WTC11 (cell line): ENCODE measurements at regions of chr9 and their contacts with region 1.

Region 1: DNA sequence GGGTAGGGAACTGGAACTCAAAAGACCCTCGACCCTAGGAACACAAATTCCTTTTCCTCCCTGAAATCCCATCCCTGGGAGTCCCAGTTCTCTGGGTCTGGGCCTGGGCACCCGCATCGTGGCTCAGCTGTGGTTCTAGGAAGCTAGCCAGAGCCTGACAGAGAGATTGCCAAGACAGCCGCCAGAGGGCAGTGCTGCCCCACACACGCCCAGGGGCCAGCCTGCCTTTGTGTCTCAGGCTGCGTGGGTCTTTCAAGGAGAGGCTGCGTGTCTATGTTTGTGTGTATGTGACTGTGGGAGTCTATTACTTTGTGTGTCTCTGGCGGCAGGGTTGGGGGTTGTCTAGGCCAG is 32.0 kb upstream of the TTLL11 start:
- DNase-seq: peak; percentile 84
- ATAC-seq: peak; percentile 59
- H3K4me3 Mint-ChIP-seq: peak overlapping the region; percentile 73
- H3K27ac Mint-ChIP-seq: no peak overlapping the region
- H3K4me1 Mint-ChIP-seq: peaks cover 22% of the 10 kb centered on the region
- H3K27me3 Mint-ChIP-seq: peaks cover 38% of the 10 kb centered on the region
- CTCF ChIP-seq: peak; percentile 88

Region 2: DNA sequence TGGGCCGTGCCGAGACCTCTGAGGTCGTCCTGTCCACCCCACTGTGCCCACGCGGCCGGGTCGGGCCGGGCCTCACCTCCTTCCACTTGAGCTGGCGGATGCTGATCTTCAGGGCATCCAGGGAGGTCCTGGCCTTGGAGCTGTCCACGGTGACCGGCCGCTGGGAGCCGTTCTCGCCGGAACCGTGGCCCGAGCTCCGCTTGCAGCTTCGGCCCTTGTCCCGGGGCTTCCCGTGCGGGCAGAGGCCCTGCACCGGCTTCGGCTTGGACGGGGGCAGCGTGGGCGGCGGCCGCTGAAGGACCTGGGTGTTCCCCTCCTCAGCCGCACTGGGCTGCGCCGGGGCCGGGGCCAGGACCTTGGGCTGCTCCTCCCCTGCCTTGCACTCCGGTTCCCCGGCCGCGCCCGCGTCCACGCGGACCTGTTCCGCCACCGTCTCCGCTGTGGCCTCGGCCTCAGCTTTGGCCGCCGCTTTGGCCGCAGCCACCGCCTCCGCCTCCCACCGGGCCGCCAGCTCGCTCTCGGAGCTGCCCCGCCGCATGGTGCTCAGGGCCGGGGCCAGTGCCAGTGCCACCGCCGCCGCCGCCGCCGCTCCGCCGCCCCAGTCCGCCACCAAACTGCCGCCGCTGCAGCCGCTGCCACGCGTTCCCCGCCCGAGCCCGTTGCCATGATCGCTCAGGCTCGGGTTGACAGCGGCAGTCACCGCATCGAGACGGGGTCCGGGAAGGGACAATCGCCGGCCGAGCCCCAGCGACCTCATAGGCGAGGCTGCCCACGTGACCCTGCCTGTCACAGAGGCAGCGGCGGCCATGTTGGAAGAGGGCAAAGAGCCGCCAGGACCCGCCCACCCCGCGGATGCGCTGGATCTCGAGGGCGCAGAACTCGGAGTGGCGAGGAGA is 32.3 kb before region 1 on chr9 and contains the start of gene TTLL11:
- CTCF ChIA-PET with region 1: interaction called, 627 read pairs
- POLR2A ChIA-PET with region 1: interaction called, 3 read pairs
- DNase-seq: peak; percentile 92
- ATAC-seq: peak; percentile 82
- H3K4me3 Mint-ChIP-seq: peak within 1 kb of the TSS; percentile 82
- H3K27ac Mint-ChIP-seq: no peak within 1 kb of the TSS
- H3K4me1 Mint-ChIP-seq: peaks cover 12% of the 10 kb centered on the region
- H3K27me3 Mint-ChIP-seq: peaks cover 45% of the 10 kb centered on the region
- CTCF ChIP-seq: no peak
- total RNA-seq, gene TTLL11: 0.50 to 1.1 TPM (median 0.69 TPM) in 3 replicates

Region 3: DNA sequence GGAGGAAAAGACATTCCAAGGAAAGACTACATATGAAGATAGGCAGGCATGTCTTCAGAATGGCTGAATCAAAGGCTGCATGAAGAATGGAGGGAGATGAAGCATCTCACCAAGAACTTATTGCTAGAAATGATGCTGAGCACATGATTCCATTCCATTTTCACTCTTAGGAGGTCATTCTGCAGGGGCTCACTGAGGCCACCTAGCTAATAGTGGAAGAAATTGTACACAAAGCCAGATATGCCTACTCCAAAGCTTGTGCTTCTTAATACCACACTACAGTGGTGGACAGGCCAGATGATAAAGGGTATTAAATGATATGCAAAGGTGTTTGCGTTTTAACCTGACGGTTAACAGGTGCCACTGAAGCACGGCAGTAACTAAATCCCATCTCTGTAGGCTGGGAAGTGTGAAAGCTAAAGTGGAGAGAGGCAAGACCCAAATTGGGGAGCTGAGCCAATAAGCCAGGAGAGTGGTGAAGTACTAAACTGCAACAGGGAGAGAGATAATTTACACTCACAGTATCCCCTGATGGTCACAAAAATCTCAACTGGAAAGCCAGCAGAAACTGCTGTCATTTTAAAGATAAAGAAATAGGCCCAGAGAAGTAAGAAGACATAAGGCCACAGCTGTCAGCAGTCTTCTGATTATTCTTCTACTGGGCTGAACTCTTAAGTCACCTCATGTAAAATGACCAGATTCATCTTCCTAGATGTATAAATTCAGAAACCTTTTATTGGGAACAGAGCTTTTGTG is 19.9 kb after region 1 on chr9:
- CTCF ChIA-PET with region 1: interaction called, 60 read pairs
- POLR2A ChIA-PET with region 1: no interaction called
- DNase-seq: no peak
- ATAC-seq: no peak; the same call in 1 of the 2 replicates
- H3K4me3 Mint-ChIP-seq: no peak overlapping the region
- H3K27ac Mint-ChIP-seq: no peak overlapping the region
- H3K4me1 Mint-ChIP-seq: no peaks in the 10 kb centered on the region
- H3K27me3 Mint-ChIP-seq: no peaks in the 10 kb centered on the region
- CTCF ChIP-seq: no peak

Region 4: GRCh38 chr9:122190609-122191381 is 65.7 kb after region 1 on chr9:
- CTCF ChIA-PET with region 1: interaction called, 26 read pairs
- POLR2A ChIA-PET with region 1: no interaction called
- DNase-seq: no peak
- ATAC-seq: no peak
- H3K4me3 Mint-ChIP-seq: no peak overlapping the region
- H3K27ac Mint-ChIP-seq: no peak overlapping the region
- H3K4me1 Mint-ChIP-seq: peaks cover 16% of the 10 kb centered on the region
- H3K27me3 Mint-ChIP-seq: no peaks in the 10 kb centered on the region
- CTCF ChIP-seq: no peak

Region 5: GRCh38 chr9:122264360-122265148 is 139.4 kb after region 1 on chr9 and contains the starts of genes MRRF and RBM18:
- CTCF ChIA-PET with region 1: interaction called, 15 read pairs
- POLR2A ChIA-PET with region 1: interaction called, 3 read pairs
- DNase-seq: peak; percentile 93
- ATAC-seq: peak; percentile 84
- H3K4me3 Mint-ChIP-seq: peak within 1 kb of the TSS; percentile 95
- H3K27ac Mint-ChIP-seq: peak within 1 kb of the TSS; percentile 99
- H3K4me1 Mint-ChIP-seq: peaks cover 20% of the 10 kb centered on the region
- H3K27me3 Mint-ChIP-seq: no peaks in the 10 kb centered on the region
- CTCF ChIP-seq: no peak
- total RNA-seq, gene MRRF: 36.1 to 42.3 TPM (median 38.8 TPM) in 3 replicates
- total RNA-seq, gene RBM18: 11.4 to 14.3 TPM (median 13.1 TPM) in 3 replicates

Region 6: GRCh38 chr9:122356627-122357026 is 231.5 kb after region 1 on chr9:
- CTCF ChIA-PET with region 1: interaction called, 366 read pairs
- POLR2A ChIA-PET with region 1: no interaction called
- DNase-seq: peak; percentile 55
- ATAC-seq: peak; percentile 96
- H3K4me3 Mint-ChIP-seq: no peak overlapping the region
- H3K27ac Mint-ChIP-seq: no peak overlapping the region
- H3K4me1 Mint-ChIP-seq: peaks cover 4% of the 10 kb centered on the region; the same call in 1 of the 2 replicates
- H3K27me3 Mint-ChIP-seq: peaks cover 12% of the 10 kb centered on the region; the same call in 1 of the 2 replicates
- CTCF ChIP-seq: peak; percentile 30; the same call in 1 of the 2 replicates